ENCODE measurements at regions of chr1 and their contacts with region 1.

Region 1: DNA sequence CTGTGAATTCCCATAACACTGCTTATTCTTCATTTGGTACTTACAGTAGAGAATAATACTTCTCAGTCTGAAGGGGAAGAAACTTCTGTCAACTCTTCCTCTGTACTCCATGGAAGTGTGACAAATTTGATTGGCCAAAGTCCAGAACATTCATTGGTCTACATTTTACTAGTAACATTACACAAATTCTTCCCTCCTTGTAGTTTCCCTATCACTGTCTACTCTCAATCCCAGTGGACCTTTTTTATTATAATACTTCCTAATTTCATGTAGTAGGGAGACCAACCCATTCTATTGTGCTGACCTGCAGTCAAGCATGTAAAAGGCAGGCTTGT is 74.7 kb downstream of the ALG6 start:
- DNase-seq: no peak
- ATAC-seq: no peak
- H3K4me3 ChIP-seq: no peak overlapping the region
- H3K27ac ChIP-seq: no peak overlapping the region
- H3K4me1 ChIP-seq: no peaks in the 10 kb centered on the region
- H3K27me3 ChIP-seq: no peaks in the 10 kb centered on the region
- CTCF ChIP-seq: no peak
- POLR2A ChIP-seq: no peak
- RAD21 ChIP-seq: no peak

Region 2: DNA sequence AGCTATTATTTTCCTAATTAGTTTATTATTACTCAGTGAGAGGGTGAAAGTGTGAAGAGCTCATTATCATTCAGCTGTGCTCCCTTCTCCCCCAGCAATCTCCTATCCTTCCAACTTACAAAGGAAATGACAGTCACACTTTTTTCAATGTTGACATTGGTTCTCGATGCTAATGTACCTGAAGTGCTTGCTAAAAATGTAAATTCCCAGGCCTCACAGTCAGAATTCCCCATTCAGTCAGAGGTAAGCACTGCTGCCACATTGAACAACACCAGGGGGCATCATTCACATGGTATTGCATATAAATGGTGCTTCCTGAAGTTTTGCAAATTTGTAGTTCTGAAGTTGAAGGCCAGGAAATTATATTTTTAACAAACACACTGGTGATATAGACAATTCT is 252.4 kb before region 1 on chr1:
- CTCF ChIA-PET with region 1: no interaction called
- POLR2A ChIA-PET with region 1: no interaction called
- RAD21 ChIA-PET with region 1: no interaction called
- intact Hi-C with region 1: loop called (anchors 2 kb)
- DNase-seq: peak; percentile 15
- ATAC-seq: peak; percentile 61
- H3K4me3 ChIP-seq: no peak overlapping the region
- H3K27ac ChIP-seq: no peak overlapping the region
- H3K4me1 ChIP-seq: no peaks in the 10 kb centered on the region
- H3K27me3 ChIP-seq: no peaks in the 10 kb centered on the region
- CTCF ChIP-seq: peak; percentile 33 to 58 (median 49); a peak in 5 of 6 replicates
- POLR2A ChIP-seq: no peak
- RAD21 ChIP-seq: peak; percentile 48

Region 3: GRCh38 chr1:63342402-63342801 is 99.7 kb before region 1 on chr1:
- CTCF ChIA-PET with region 1: no interaction called
- POLR2A ChIA-PET with region 1: no interaction called
- RAD21 ChIA-PET with region 1: no interaction called
- intact Hi-C with region 1: no loop called
- DNase-seq: no peak
- ATAC-seq: no peak
- H3K4me3 ChIP-seq: no peak overlapping the region
- H3K27ac ChIP-seq: no peak overlapping the region
- H3K4me1 ChIP-seq: no peaks in the 10 kb centered on the region
- H3K27me3 ChIP-seq: no peaks in the 10 kb centered on the region
- CTCF ChIP-seq: no peak
- POLR2A ChIP-seq: no peak
- RAD21 ChIP-seq: no peak